ENCODE measurements at regions of chr17 and their contacts with region 1.

Region 1: DNA sequence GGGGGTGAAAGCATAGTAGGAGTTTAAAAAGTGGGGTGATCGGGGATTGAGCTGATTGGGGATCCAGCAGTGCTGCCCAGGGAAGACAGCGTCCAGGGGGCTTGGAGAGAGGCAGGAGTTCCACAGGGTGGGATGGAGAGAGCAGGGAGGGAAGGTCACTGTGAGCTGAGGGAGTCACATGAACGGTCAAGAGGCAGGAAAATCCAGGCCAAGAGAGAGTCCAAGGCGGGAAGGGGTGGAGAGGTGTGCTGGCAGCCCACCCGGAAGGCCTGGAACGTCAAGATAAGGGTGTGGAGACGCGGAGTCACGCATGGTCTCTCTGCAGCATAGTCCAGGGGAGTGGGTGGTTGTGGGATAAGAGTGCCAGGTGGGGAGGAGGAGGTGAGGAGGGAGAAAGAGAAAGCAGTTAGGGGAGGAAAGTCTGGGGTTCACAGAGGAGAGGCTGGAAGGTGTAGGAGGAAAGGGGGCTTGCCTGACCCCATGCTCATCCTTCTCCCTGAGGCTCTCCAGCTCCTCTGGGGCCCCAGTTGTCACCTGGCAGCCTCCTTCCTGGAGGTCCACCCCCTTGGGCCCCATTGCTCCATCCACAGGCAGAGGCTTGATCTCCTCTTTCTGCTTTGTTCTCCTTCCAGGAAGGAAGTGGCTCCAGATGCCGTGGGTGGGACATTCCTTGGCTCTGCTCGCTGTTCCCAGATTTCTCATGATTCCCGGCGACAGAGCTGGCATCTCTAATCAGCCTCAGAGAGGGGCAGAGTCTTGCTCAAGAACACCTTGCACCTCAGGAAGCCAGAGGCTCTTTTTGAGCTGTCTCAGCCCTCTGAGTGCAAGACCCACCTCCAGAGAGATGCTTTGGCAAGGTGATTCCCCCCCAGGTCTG is 28.7 kb downstream of the CCR7 start:
- DNase-seq: no peak
- ATAC-seq: no peak
- H3K4me3 ChIP-seq: no peak overlapping the region
- H3K27ac ChIP-seq: no peak overlapping the region
- H3K4me1 ChIP-seq: peaks cover 64% of the 10 kb centered on the region
- H3K27me3 ChIP-seq: no peaks in the 10 kb centered on the region; a peak in 1 of 4 replicates
- CTCF ChIP-seq: no peak
- EP300 ChIP-seq: no peak
- POLR2A ChIP-seq: no peak
- RAD21 ChIP-seq: no peak

Region 2: GRCh38 chr17:40309031-40309948 is 227.2 kb before region 1 on chr17 and contains the start of gene RARA:
- CTCF ChIA-PET with region 1: interaction called, 23 read pairs
- POLR2A ChIA-PET with region 1: interaction called, 8 read pairs
- RAD21 ChIA-PET with region 1: interaction called, 9 read pairs
- SMC1A ChIA-PET with region 1: interaction called, 7 read pairs
- in situ Hi-C with region 1: loop called (anchors 5 kb)
- intact Hi-C with region 1: loop called (anchors 5 kb)
- DNase-seq: no peak
- ATAC-seq: peak; percentile 68
- H3K4me3 ChIP-seq: peak within 1 kb of the TSS; percentile 70
- H3K27ac ChIP-seq: peak within 1 kb of the TSS; percentile 9; the same call in 1 of the 2 replicates
- H3K4me1 ChIP-seq: peaks cover 58% of the 10 kb centered on the region
- H3K27me3 ChIP-seq: no peaks in the 10 kb centered on the region
- CTCF ChIP-seq: no peak
- EP300 ChIP-seq: no peak
- POLR2A ChIP-seq: no peak
- RAD21 ChIP-seq: no peak
- polyA plus RNA-seq, gene RARA: 0.13 to 0.16 TPM

Region 3: DNA sequence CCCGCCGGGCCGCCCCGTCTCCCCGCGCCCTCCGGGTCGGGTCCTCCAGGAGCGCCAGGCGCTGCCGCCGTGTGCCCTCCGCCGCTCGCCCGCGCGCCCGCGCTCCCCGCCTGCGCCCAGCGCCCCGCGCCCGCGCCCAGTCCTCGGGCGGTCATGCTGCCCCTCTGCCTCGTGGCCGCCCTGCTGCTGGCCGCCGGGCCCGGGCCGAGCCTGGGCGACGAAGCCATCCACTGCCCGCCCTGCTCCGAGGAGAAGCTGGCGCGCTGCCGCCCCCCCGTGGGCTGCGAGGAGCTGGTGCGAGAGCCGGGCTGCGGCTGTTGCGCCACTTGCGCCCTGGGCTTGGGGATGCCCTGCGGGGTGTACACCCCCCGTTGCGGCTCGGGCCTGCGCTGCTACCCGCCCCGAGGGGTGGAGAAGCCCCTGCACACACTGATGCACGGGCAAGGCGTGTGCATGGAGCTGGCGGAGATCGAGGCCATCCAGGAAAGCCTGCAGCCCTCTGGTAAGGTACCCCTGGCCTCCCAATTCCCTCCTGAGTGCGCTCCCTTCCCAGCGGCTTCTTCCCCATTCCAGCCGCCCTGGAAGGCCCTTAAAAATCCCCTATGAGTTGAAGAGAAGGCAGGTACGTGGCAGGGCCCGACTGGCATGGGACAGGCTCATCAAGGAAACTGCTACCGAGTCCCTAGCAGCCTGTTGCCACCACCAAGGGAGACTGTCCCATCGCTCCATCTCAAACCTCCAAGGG is 92.8 kb before region 1 on chr17:
- CTCF ChIA-PET with region 1: interaction called, 289 read pairs
- POLR2A ChIA-PET with region 1: interaction called, 9 read pairs
- RAD21 ChIA-PET with region 1: interaction called, 175 read pairs
- SMC1A ChIA-PET with region 1: interaction called, 68 read pairs
- in situ Hi-C with region 1: loop called (anchors 25 kb)
- intact Hi-C with region 1: loop called (anchors 1 kb)
- DNase-seq: no peak
- ATAC-seq: peak; percentile 84
- H3K4me3 ChIP-seq: peak overlapping the region; percentile 61
- H3K27ac ChIP-seq: no peak overlapping the region
- H3K4me1 ChIP-seq: peaks cover 19% of the 10 kb centered on the region
- H3K27me3 ChIP-seq: peaks cover 0 to 16% of the 10 kb centered on the region in 2 experiments; a peak in 1 of 4 replicates
- CTCF ChIP-seq: peak; percentile 46 to 72 (median 71)
- EP300 ChIP-seq: no peak
- POLR2A ChIP-seq: no peak
- RAD21 ChIP-seq: peak; percentile 33; the same call in 1 of the 2 replicates

Region 4: DNA sequence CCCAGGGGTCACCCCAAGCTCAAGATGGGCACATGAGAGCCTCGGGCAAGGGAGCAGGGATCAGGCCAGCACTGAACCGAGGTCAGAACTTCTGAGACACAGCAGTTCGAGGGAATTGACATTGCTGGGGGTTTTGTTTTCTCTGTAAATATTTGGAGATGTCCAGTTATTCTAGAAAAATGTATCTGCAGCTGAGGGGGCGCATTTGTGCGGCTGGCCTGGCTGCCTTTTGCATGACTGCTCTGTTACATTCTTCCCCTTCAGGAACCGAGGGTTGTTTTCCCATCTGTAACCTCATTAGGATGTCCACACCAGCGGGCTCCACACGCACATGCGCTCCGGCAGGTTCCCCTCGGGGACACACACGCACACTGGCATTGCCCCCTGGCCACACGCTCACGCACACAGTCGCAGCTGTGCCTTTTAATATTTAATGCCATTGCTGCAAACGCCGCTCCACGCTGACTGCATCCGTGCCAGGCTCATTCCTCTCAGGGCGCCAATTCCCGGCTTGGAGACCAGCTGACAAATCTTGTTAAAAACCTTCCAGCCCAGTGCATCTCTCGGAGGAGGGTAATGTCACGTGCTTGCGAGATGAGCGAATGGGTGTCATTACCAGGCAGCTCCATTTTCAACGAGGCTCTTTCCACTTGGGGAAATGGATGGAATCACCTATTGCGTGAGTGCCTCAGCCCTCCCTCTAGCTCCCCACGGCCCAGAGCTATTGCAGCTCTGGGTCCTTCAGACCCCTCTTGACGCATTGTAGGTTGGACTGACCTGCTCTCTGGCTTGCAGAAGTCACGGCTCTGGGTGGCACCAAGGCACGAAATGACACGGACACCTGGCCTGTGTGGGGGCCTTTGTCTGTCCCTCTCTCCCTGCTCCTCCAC is 15.6 kb after region 1 on chr17:
- CTCF ChIA-PET with region 1: interaction called, 318 read pairs
- POLR2A ChIA-PET with region 1: interaction called, 24 read pairs
- RAD21 ChIA-PET with region 1: interaction called, 514 read pairs
- SMC1A ChIA-PET with region 1: interaction called, 430 read pairs
- in situ Hi-C with region 1: no loop called
- intact Hi-C with region 1: no loop called
- DNase-seq: no peak
- ATAC-seq: peak; percentile 5
- H3K4me3 ChIP-seq: no peak overlapping the region
- H3K27ac ChIP-seq: no peak overlapping the region
- H3K4me1 ChIP-seq: peaks cover 45% of the 10 kb centered on the region
- H3K27me3 ChIP-seq: no peaks in the 10 kb centered on the region
- CTCF ChIP-seq: no peak
- EP300 ChIP-seq: no peak
- POLR2A ChIP-seq: peak; percentile 82
- RAD21 ChIP-seq: no peak

Region 5: DNA sequence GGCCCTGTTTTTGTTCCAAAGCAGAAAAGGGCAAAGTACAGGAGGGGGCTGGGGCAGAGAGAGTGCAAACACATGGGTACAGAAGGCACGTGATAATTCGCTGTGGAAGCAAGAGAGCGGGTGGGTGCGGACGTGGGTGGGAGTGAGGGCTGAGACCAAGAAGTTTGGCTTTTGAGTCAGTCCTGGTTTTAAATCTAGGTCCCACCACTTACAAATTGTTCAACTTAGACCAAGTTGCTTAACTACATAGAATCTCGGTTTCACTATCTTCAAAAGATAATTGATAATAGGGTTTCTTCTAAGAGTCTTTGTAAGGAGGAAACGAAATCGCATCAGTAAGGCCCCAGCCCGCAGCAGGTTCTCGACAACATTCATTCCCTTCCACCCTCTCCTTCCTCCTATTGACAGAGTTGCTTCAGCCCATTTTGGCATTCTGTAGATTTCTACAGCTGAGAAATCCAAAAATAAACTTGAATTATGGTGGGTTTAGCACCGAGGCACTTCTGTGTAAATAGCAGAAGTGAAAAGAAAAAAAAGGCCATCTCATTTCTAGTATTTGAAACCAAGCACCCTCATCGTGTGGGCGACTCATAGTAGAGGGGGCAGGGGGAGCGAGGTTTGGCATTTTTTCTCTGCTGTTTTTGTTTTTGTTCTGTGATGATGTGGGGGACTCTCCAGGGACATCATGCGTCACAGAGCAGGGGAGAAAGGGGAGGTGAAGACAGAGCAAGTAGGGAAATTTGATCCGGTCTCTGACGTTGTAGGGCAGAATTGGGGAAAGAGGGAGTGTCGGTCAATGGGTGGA is 62.3 kb after region 1 on chr17:
- CTCF ChIA-PET with region 1: interaction called, 23 read pairs
- POLR2A ChIA-PET with region 1: interaction called, 7 read pairs
- RAD21 ChIA-PET with region 1: interaction called, 9 read pairs
- SMC1A ChIA-PET with region 1: interaction called, 22 read pairs
- in situ Hi-C with region 1: no loop called
- intact Hi-C with region 1: no loop called
- DNase-seq: peak; percentile 97
- ATAC-seq: peak; percentile 59
- H3K4me3 ChIP-seq: peak overlapping the region; percentile 38; the same call in 1 of the 2 replicates
- H3K27ac ChIP-seq: peak overlapping the region; percentile 91
- H3K4me1 ChIP-seq: peaks cover 73% of the 10 kb centered on the region
- H3K27me3 ChIP-seq: no peaks in the 10 kb centered on the region
- CTCF ChIP-seq: no peak
- EP300 ChIP-seq: peak; percentile 98
- POLR2A ChIP-seq: no peak
- RAD21 ChIP-seq: peak; percentile 30

Region 6: GRCh38 chr17:40664582-40665333 is 128.2 kb after region 1 on chr17 and contains the start of gene KRT222:
- CTCF ChIA-PET with region 1: no interaction called
- POLR2A ChIA-PET with region 1: no interaction called
- RAD21 ChIA-PET with region 1: no interaction called
- SMC1A ChIA-PET with region 1: no interaction called
- in situ Hi-C with region 1: no loop called
- intact Hi-C with region 1: no loop called
- DNase-seq: no peak
- ATAC-seq: peak; percentile 62
- H3K4me3 ChIP-seq: no peak within 1 kb of the TSS
- H3K27ac ChIP-seq: no peak within 1 kb of the TSS
- H3K4me1 ChIP-seq: no peaks in the 10 kb centered on the region
- H3K27me3 ChIP-seq: peaks cover 2 to 24% of the 10 kb centered on the region in 2 experiments; a peak in 2 of 4 replicates
- CTCF ChIP-seq: no peak
- EP300 ChIP-seq: no peak
- POLR2A ChIP-seq: no peak
- RAD21 ChIP-seq: no peak
- polyA plus RNA-seq, gene KRT222: 0.74 to 0.95 TPM

Region 7: GRCh38 chr17:40922239-40922638 is 385.7 kb after region 1 on chr17:
- CTCF ChIA-PET with region 1: no interaction called
- POLR2A ChIA-PET with region 1: no interaction called
- RAD21 ChIA-PET with region 1: no interaction called
- SMC1A ChIA-PET with region 1: no interaction called
- in situ Hi-C with region 1: no loop called
- intact Hi-C with region 1: no loop called
- DNase-seq: no peak
- ATAC-seq: no peak
- H3K4me3 ChIP-seq: no peak overlapping the region
- H3K27ac ChIP-seq: no peak overlapping the region
- H3K4me1 ChIP-seq: no peaks in the 10 kb centered on the region
- H3K27me3 ChIP-seq: peaks cover 0 to 4% of the 10 kb centered on the region in 2 experiments; a peak in 2 of 4 replicates
- CTCF ChIP-seq: no peak
- EP300 ChIP-seq: no peak
- POLR2A ChIP-seq: no peak
- RAD21 ChIP-seq: no peak

Measured in GM12878 (cell line).